ENCODE measurements at regions of chr16 and their contacts with region 1.

Region 1: DNA sequence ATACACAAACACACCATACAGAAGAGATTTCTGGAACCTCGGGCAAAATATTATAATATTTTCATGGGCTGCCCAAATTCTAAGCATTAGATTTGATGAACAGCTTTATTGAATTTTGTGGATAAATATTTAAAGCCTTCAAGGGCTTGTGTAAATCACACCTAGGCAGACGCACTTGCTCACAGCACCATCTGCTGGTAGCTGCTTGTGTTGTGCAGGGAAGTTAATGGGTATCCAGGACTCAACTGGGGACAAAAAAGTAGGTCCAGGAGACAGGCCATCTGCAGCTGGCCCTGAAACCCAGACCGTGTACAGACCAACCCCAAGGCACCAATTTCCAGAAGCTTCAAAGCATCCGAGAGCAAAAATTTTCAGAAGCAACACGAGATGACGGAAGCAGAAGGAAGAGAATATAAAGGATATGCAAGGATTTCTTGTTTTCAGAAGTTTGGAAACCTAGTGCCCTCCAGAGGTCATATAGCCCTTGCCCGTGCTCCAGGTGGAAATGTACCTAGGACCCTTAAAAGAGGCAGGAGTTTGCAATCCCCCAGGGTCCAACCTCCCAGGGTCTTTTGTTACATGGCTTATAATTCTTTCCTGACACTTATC is 140.0 kb downstream of the CHD9NB start:
- DNase-seq: peak; percentile 48 to 96 (median 78)

Region 2: GRCh38 chr16:52837251-52837650 is 75.4 kb before region 1 on chr16:
- intact Hi-C with region 1: no loop called
- DNase-seq: no peak

Region 3: GRCh38 chr16:53022374-53022773 is 109.7 kb after region 1 on chr16:
- intact Hi-C with region 1: loop called (anchors 10 kb)
- DNase-seq: peak in 8 of 10 donors; percentile 20 to 87 (median 44)

Measured in posterior cingulate gyrus (tissue), 11 donors.